Pancreas (tissue), 10 donors: ENCODE measurements at regions of chr3 and their contacts with region 1.

Region 1: DNA sequence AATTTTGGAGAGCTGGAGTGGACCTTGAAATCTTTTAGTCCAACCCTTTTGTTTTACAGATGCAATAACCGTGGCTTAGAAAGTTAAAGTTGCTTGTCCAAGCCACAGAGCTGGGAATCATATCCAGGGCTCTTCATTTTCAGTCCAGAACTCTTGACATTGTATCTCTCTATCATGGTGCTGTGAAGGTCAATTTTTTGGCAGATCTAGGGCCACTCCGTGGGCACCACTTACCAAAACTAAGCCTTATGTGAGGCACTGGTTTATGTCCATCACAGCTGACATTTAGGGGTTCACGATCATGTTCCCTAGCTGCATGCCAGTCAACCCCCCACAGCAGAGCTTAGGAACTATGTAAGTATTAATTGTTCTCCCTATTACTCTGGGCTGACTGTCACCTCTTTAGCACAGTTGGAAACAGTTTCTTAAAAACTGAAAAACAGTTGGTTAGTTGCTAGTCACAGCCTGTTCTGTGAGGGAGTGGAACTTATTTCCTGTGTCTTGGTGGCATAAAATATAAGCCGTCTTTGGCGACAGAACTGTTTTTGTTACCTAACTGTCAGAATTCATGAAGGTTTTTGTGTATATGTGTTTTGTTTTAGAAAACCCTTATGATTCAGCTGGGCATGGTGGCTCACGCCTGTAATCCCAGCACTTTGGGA is 189.6 kb upstream of the UMPS start:
- DNase-seq: no peak
- ATAC-seq: no peak
- H3K4me3 ChIP-seq: no peak overlapping the region
- H3K27ac ChIP-seq: no peak overlapping the region
- H3K4me1 ChIP-seq: no peaks in the 10 kb centered on the region
- H3K27me3 ChIP-seq: no peaks in the 10 kb centered on the region
- CTCF ChIP-seq: no peak

Region 2: DNA sequence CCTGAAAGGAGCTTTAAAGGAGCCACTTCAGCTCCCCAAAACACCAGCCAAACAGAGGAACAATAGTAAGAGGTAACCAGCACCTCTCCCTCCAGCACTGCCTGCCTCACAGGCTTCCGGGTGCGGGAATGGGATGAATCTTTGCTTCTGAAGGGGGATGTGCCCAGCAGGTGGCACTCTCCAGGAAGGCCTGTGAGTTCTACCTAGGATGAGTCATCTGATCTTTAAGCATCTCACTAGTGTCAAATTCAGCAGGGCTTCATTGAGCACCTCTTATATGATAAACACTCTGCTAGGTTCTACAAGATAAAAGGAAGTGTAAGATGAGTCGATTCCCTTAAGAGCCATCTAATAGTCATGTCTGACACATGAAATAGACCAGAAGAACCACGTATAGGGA is 47.9 kb before region 1 on chr3:
- intact Hi-C with region 1: loop called in 1 of 3 experiments (anchors 10 kb)
- DNase-seq: peak; percentile 44 to 77 (median 62)
- ATAC-seq: peak; percentile 86 to 94 (median 94)
- H3K4me3 ChIP-seq: no peak overlapping the region
- H3K27ac ChIP-seq: no peak overlapping the region
- H3K4me1 ChIP-seq: no peaks in the 10 kb centered on the region
- H3K27me3 ChIP-seq: no peaks in the 10 kb centered on the region
- CTCF ChIP-seq: peak; percentile 25 to 50 (median 42)